Activated CD4-positive, alpha-beta T cell treated with anti-CD3 and anti-CD28 coated beads, Interleukin-2, amount 10 ng/mL, durations not matched to agents 24 days and 14 days (primary cell): ENCODE measurements at regions of chr17 and their contacts with region 1.

Region 1: DNA sequence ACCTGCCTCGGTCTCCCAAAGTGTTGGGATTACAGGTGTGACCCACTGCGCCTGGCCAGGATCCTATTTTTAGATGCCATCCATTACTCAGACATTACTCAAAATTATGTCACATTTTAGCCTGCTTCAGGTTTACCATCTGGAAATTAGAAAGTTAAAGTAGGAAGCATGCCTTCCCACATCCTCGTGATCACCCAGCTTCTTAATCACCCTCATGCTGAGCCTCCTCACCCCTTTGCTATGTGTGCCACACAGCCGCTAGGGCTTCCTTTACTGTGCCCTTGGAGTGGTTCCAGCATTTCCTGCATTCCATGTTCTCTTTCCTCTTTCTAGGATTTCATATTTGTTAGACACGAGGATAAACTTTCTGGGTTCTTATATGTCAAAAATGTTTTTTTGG is 9.3 kb downstream of the ADORA2B start:
- DNase-seq: no peak
- H3K4me3 Mint-ChIP-seq: no peak overlapping the region
- H3K27ac Mint-ChIP-seq: no peak overlapping the region
- H3K4me1 Mint-ChIP-seq: peaks cover 23% of the 10 kb centered on the region
- H3K27me3 Mint-ChIP-seq: peaks cover 54% of the 10 kb centered on the region

Region 2: DNA sequence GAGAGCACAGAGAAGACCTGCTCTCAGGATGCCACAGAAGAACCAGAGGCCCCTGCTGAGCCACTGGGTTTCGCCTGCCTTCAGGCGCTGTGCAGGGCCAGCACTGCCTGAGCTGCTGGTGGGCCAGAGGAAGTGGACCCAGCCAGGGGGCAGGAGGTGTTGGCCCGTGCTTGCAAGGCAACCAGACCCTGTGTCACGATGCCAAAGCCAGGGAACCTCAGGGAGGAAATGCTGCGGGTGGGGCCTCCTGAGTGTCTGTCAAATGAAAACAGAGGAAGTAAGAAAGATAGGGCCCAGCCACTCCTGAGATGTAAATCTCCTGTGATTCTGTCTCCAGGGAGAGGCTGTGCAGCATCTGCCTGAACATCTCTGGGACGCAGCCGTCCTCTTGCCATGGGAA is 67.4 kb before region 1 on chr17:
- intact Hi-C with region 1: loop called (anchors 5 kb)
- DNase-seq: peak; percentile 73
- H3K4me3 Mint-ChIP-seq: no peak overlapping the region
- H3K27ac Mint-ChIP-seq: peak overlapping the region; percentile 60
- H3K4me1 Mint-ChIP-seq: peaks cover 20% of the 10 kb centered on the region
- H3K27me3 Mint-ChIP-seq: peaks cover 3% of the 10 kb centered on the region

Region 3: GRCh38 chr17:15981208-15981607 is 27.0 kb after region 1 on chr17:
- intact Hi-C with region 1: loop called (anchors 1 kb)
- DNase-seq: no peak
- H3K4me3 Mint-ChIP-seq: no peak overlapping the region
- H3K27ac Mint-ChIP-seq: no peak overlapping the region
- H3K4me1 Mint-ChIP-seq: peaks cover 20% of the 10 kb centered on the region
- H3K27me3 Mint-ChIP-seq: no peaks in the 10 kb centered on the region

Region 4: GRCh38 chr17:16027708-16028584 is 73.7 kb after region 1 on chr17:
- intact Hi-C with region 1: loop called (anchors 1 kb)
- DNase-seq: peak; percentile 78
- H3K4me3 Mint-ChIP-seq: peak overlapping the region; percentile 71
- H3K27ac Mint-ChIP-seq: peak overlapping the region; percentile 93
- H3K4me1 Mint-ChIP-seq: peaks cover 20% of the 10 kb centered on the region
- H3K27me3 Mint-ChIP-seq: no peaks in the 10 kb centered on the region